SK-N-SH (cell line): ENCODE measurements at regions of chr1 and their contacts with region 1.

Region 1: DNA sequence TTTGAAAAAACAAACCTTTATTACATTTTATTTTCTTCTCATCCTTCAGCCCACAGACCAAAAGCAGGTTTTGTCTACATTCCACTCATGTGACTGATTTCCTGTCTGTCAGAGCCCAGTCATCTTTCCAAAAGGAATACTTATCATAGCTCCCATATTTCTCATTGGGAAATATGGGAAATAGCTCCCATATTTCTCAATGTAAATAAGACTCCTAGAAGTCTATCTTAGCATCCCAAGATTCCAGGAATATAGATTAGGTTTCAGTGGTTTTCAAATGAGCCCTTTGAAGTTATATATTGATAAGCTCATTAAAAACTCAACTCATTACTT is 19.1 kb upstream of the NRDC start:
- DNase-seq: no peak
- H3K4me3 ChIP-seq: peak overlapping the region in 1 of 2 experiments; percentile 46; a peak in 2 of 4 replicates
- H3K27ac ChIP-seq: peak overlapping the region; percentile 52 to 99; a peak in 3 of 4 replicates
- H3K4me1 ChIP-seq: peaks cover 6 to 28% of the 10 kb centered on the region in 2 experiments; a peak in 3 of 4 replicates
- H3K27me3 ChIP-seq: no peaks in the 10 kb centered on the region
- CTCF ChIP-seq: no peak
- EP300 ChIP-seq: peak in 1 of 2 experiments; percentile 95; a peak in 2 of 4 replicates
- RAD21 ChIP-seq: no peak

Region 2: GRCh38 chr1:51814513-51814912 is 83.2 kb before region 1 on chr1:
- CTCF ChIA-PET with region 1: no interaction called
- POLR2A ChIA-PET with region 1: no interaction called
- DNase-seq: no peak
- H3K4me3 ChIP-seq: no peak overlapping the region
- H3K27ac ChIP-seq: no peak overlapping the region
- H3K4me1 ChIP-seq: no peaks in the 10 kb centered on the region; a peak in 1 of 4 replicates
- H3K27me3 ChIP-seq: no peaks in the 10 kb centered on the region
- CTCF ChIP-seq: no peak
- EP300 ChIP-seq: no peak
- RAD21 ChIP-seq: no peak

Region 3: GRCh38 chr1:51926171-51926812 is 28.6 kb after region 1 on chr1:
- CTCF ChIA-PET with region 1: interaction called, 12 read pairs
- POLR2A ChIA-PET with region 1: no interaction called
- DNase-seq: no peak
- H3K4me3 ChIP-seq: no peak overlapping the region
- H3K27ac ChIP-seq: peak overlapping the region in 1 of 2 experiments; percentile 69; a peak in 2 of 4 replicates
- H3K4me1 ChIP-seq: peaks cover 3 to 39% of the 10 kb centered on the region in 2 experiments; a peak in 2 of 4 replicates
- H3K27me3 ChIP-seq: no peaks in the 10 kb centered on the region
- CTCF ChIP-seq: peak; percentile 64
- EP300 ChIP-seq: no peak
- RAD21 ChIP-seq: peak; percentile 61

Region 4: GRCh38 chr1:51969038-51969705 is 71.5 kb after region 1 on chr1:
- CTCF ChIA-PET with region 1: interaction called, 14 read pairs
- POLR2A ChIA-PET with region 1: no interaction called
- DNase-seq: no peak
- H3K4me3 ChIP-seq: no peak overlapping the region
- H3K27ac ChIP-seq: peak overlapping the region in 1 of 2 experiments; percentile 85; a peak in 2 of 4 replicates
- H3K4me1 ChIP-seq: peaks cover 0 to 38% of the 10 kb centered on the region in 2 experiments; a peak in 2 of 4 replicates
- H3K27me3 ChIP-seq: no peaks in the 10 kb centered on the region
- CTCF ChIP-seq: no peak
- EP300 ChIP-seq: peak in 1 of 2 experiments; percentile 48; a peak in 1 of 4 replicates
- RAD21 ChIP-seq: no peak

Region 5: DNA sequence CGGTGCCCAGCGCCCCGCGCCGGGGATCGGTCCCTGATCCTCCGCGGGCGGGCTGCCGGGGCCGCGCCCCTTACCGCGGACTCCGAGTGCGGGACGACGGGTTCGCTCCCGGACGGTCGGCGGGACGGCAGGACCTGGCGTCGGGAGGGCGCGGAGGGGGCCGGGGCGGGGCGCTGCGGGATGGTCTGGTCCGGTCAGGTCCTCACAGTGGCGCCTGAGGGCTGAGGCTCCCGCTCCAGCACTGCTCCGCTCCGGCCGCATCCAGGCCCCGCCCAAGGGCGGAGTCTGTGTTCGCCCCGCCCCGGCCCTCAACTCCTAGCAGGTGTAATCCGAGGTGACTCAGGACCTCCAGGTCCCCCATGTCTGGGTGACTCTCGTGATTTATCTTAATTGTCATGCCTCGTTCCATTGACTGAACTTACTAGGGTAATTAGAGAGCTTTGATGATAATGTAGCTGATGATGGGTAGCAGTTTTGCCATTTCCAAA is 92.9 kb after region 1 on chr1 and contains the start of gene RAB3B:
- CTCF ChIA-PET with region 1: interaction called, 117 read pairs
- POLR2A ChIA-PET with region 1: no interaction called
- DNase-seq: peak; percentile 92
- H3K4me3 ChIP-seq: peak within 1 kb of the TSS; percentile 69 to 77
- H3K27ac ChIP-seq: no peak within 1 kb of the TSS
- H3K4me1 ChIP-seq: peaks cover 7 to 8% of the 10 kb centered on the region in 2 experiments; a peak in 2 of 4 replicates
- H3K27me3 ChIP-seq: no peaks in the 10 kb centered on the region
- CTCF ChIP-seq: no peak
- EP300 ChIP-seq: no peak
- RAD21 ChIP-seq: no peak
- polyA plus RNA-seq, gene RAB3B: 10.2 and 12.4 TPM in 2 replicates

Region 6: GRCh38 chr1:52002038-52002917 is 104.6 kb after region 1 on chr1:
- CTCF ChIA-PET with region 1: interaction called, 117 read pairs
- POLR2A ChIA-PET with region 1: interaction called, 3 read pairs
- DNase-seq: peak; percentile 79
- H3K4me3 ChIP-seq: no peak overlapping the region
- H3K27ac ChIP-seq: no peak overlapping the region
- H3K4me1 ChIP-seq: peaks cover 6 to 16% of the 10 kb centered on the region in 2 experiments; a peak in 2 of 4 replicates
- H3K27me3 ChIP-seq: no peaks in the 10 kb centered on the region
- CTCF ChIP-seq: peak; percentile 95
- EP300 ChIP-seq: no peak
- RAD21 ChIP-seq: peak; percentile 97